Calu3 (cell line): ENCODE measurements at regions of chr16 and their contacts with region 1.

Region 1: GRCh38 chr16:81095953-81096717 is at the start of gene GCSH:
- DNase-seq: peak; percentile 100
- H3K4me3 Mint-ChIP-seq: peak within 1 kb of the TSS; percentile 70
- H3K27ac Mint-ChIP-seq: peak within 1 kb of the TSS; percentile 74
- H3K4me1 Mint-ChIP-seq: peaks cover 35% of the 10 kb centered on the region
- H3K27me3 Mint-ChIP-seq: no peaks in the 10 kb centered on the region
- CTCF ChIP-seq: no peak
- total RNA-seq, gene GCSH: 85.2 and 109 TPM in 2 replicates

Region 2: GRCh38 chr16:81123092-81123852 is 27.1 kb after region 1 on chr16:
- CTCF ChIA-PET with region 1: no interaction called
- intact Hi-C with region 1: no loop called
- DNase-seq: no peak
- H3K4me3 Mint-ChIP-seq: no peak overlapping the region
- H3K27ac Mint-ChIP-seq: no peak overlapping the region
- H3K4me1 Mint-ChIP-seq: no peaks in the 10 kb centered on the region
- H3K27me3 Mint-ChIP-seq: no peaks in the 10 kb centered on the region
- CTCF ChIP-seq: no peak

Region 3: DNA sequence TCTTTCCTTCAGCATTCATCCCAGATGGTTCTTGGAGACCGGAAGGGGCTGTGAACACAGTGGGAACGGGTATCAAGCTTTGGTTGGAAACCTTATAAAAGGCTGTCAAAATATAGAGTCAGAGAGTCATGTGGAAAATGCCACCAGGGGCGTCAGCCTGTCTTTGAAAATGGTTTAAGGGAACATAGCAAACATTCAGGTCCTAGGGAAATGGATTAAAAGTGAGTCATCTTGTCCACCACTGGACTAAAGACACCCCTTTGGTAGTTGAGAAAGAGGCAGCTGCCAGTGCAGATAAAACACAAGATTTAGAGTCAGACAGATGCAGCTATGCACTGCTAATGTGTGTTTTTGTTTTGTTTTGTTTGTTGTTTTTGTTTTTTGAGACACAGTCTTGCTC is 94.5 kb after region 1 on chr16:
- CTCF ChIA-PET with region 1: no interaction called
- intact Hi-C with region 1: loop called (anchors 5 kb)
- DNase-seq: peak; percentile 13
- H3K4me3 Mint-ChIP-seq: no peak overlapping the region
- H3K27ac Mint-ChIP-seq: no peak overlapping the region
- H3K4me1 Mint-ChIP-seq: peaks cover 20% of the 10 kb centered on the region
- H3K27me3 Mint-ChIP-seq: no peaks in the 10 kb centered on the region
- CTCF ChIP-seq: no peak